ENCODE measurements at regions of chr4 and their contacts with region 1.

Region 1: GRCh38 chr4:39908284-39908683 is 69.4 kb downstream of the PDS5A start:
- DNase-seq: peak; percentile 40
- ATAC-seq: no peak
- H3K4me3 ChIP-seq: no peak overlapping the region
- H3K27ac ChIP-seq: no peak overlapping the region
- H3K4me1 ChIP-seq: no peaks in the 10 kb centered on the region
- H3K27me3 ChIP-seq: no peaks in the 10 kb centered on the region
- CTCF ChIP-seq: no peak
- POLR2A ChIP-seq: no peak
- RAD21 ChIP-seq: no peak

Region 2: GRCh38 chr4:39846120-39846519 is 62.2 kb before region 1 on chr4:
- CTCF ChIA-PET with region 1: no interaction called
- POLR2A ChIA-PET with region 1: no interaction called
- dilution Hi-C with region 1: no loop called
- in situ Hi-C with region 1: no loop called
- intact Hi-C with region 1: loop called (anchors 10 kb)
- DNase-seq: peak; percentile 19
- ATAC-seq: no peak
- H3K4me3 ChIP-seq: no peak overlapping the region
- H3K27ac ChIP-seq: no peak overlapping the region
- H3K4me1 ChIP-seq: peaks cover 3% of the 10 kb centered on the region; the same call in 1 of the 2 replicates
- H3K27me3 ChIP-seq: no peaks in the 10 kb centered on the region
- CTCF ChIP-seq: no peak
- POLR2A ChIP-seq: no peak
- RAD21 ChIP-seq: no peak

Region 3: DNA sequence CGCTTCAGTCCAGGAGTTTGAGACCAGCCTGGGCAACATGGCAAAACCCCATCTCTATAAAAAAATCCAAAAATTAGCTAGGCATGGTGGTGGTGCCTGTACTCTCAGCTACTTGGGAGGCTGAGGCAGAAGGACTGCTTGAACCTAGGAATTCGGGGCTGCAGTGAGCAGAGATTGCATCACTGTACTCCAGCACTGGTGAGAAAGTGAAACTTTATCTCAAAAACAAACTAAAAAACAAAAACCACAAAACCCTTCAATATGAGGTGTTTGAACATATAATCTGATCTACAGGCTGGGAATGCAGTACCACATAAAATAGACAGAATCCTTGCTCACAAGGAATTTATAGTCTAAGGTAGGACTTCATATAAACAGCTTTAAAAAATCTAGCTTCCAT is 34.5 kb before region 1 on chr4:
- CTCF ChIA-PET with region 1: no interaction called
- POLR2A ChIA-PET with region 1: no interaction called
- dilution Hi-C with region 1: no loop called
- in situ Hi-C with region 1: no loop called
- intact Hi-C with region 1: loop called (anchors 5 kb)
- DNase-seq: no peak
- ATAC-seq: no peak
- H3K4me3 ChIP-seq: no peak overlapping the region
- H3K27ac ChIP-seq: no peak overlapping the region
- H3K4me1 ChIP-seq: no peaks in the 10 kb centered on the region
- H3K27me3 ChIP-seq: no peaks in the 10 kb centered on the region
- CTCF ChIP-seq: no peak
- POLR2A ChIP-seq: no peak
- RAD21 ChIP-seq: no peak

Region 4: DNA sequence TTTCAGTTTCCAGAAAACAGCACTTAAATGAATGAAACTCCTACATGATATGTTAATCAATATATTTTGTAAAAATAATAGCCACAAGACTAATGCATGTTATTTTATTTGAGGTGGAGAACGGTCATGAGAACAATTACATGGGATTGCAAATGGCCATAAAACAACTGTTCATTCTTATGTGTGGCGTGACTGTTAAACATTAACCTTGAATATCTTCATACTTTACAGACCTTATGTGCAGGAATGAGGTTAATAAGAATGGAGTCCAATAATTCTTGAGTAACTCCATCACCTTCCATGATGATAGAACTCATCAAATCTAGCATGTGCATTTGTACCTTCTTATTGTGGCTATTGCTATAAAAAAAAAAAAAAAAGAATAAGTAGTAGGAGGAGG is 14.1 kb after region 1 on chr4:
- CTCF ChIA-PET with region 1: interaction called, 4 read pairs
- POLR2A ChIA-PET with region 1: no interaction called
- dilution Hi-C with region 1: no loop called
- in situ Hi-C with region 1: no loop called
- intact Hi-C with region 1: loop called (anchors 2 kb)
- DNase-seq: no peak
- ATAC-seq: no peak
- H3K4me3 ChIP-seq: no peak overlapping the region
- H3K27ac ChIP-seq: no peak overlapping the region
- H3K4me1 ChIP-seq: no peaks in the 10 kb centered on the region
- H3K27me3 ChIP-seq: no peaks in the 10 kb centered on the region
- CTCF ChIP-seq: no peak
- POLR2A ChIP-seq: no peak
- RAD21 ChIP-seq: no peak